ENCODE measurements at regions of chr6 and their contacts with region 1.

Region 1: GRCh38 chr6:109382576-109383437 is 540 bp upstream of the CD164 start:
- DNase-seq: peak; percentile 88
- H3K4me3 Mint-ChIP-seq: peak overlapping the region; percentile 89
- H3K27ac Mint-ChIP-seq: peak overlapping the region; percentile 98
- H3K4me1 Mint-ChIP-seq: peaks cover 46% of the 10 kb centered on the region
- H3K27me3 Mint-ChIP-seq: peaks cover 6% of the 10 kb centered on the region

Region 2: DNA sequence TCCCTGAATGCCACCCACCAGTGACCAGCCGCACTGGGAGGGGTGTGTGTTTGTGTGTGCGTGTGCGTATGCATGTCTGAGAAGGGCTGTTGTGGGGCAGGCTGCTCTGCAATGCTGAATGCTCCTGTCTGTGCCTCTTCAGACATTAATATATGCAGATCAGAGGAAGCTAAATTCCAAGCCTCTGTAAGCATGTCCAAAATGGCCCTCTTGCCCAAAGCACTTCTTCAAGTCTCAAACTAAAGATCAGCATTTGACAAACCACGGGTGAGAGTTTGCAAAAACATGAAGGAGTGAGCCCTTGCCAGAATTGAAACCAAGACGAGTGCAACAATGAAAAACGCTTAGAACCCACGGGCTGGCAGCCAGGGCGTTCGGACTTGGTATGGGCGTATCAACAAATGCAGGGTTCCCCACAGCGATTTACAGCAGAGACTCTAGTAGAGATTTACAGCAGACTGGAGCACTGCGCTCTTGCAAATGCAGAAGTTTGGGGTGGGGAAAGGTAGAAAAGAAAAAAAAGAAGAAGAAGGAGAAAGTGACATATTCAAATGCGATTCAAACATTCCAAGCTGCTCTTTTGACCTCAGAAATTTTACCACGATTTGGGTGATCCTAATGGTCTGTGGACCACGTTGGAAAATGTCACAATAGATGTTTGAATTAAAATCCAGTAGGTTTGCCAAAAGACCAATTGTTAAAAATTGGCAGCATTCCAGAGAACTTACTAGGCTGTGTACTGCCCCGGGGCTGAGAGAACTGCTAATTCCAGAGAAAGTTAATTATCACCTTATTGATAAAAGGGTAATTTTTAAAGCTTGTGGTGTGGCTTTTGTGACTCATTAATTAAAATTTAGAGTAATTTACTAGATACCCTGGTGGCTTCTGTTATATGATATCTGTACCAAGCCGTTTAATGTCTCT is 1562.2 kb before region 1 on chr6:
- intact Hi-C with region 1: loop called (anchors 2 kb)
- DNase-seq: peak; percentile 27
- H3K4me3 Mint-ChIP-seq: peak overlapping the region; percentile 83
- H3K27ac Mint-ChIP-seq: peak overlapping the region; percentile 97
- H3K4me1 Mint-ChIP-seq: peaks cover 88% of the 10 kb centered on the region
- H3K27me3 Mint-ChIP-seq: no peaks in the 10 kb centered on the region

Region 3: DNA sequence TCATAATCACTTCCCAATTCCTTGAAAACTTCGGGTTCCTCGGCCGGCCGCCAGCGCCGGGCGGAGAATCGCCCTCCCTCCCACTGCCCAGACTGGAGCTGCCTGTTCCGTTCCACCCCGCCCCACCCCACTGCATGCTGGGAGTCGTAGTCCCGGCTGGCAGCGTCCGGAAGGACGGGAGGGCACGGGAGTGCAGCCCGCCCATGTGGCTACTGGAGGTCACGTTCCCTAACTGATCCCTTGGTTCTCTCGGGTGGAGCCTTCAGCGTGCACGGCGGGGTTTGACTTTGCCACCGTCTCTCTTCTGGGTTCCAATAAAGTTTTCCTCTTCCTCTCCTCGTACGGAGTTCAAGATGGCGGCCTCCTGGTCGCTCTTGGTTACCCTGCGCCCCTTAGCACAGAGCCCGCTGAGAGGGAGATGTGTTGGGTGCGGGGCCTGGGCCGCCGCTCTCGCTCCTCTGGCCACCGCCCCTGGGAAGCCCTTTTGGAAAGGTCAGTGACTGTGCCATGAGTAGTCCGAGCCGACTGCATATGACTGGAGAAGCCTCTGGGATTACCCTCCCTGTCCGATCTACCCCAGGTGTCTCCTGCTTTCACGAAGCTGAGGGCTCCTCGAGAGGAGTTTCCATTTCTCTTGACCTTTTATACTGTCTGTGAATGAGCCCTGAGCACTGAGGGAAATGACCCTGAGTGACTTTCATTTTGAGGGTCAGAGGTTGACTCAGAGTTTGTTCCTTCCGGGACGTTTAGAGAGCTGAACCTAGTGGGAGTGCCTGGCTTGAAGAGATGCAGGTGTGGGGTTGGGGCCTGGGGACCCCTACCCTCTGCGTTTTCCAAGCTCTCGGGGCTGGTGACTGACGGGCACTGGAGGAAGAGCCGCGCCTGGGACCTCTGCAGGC is 1087.8 kb before region 1 on chr6 and contains the start of gene AFG1L:
- intact Hi-C with region 1: loop called (anchors 10 kb)
- DNase-seq: peak; percentile 82
- H3K4me3 Mint-ChIP-seq: peak within 1 kb of the TSS; percentile 100
- H3K27ac Mint-ChIP-seq: peak within 1 kb of the TSS; percentile 100
- H3K4me1 Mint-ChIP-seq: peaks cover 26% of the 10 kb centered on the region
- H3K27me3 Mint-ChIP-seq: peaks cover 2% of the 10 kb centered on the region
- total RNA-seq, gene AFG1L: 4.3 and 6.0 TPM in 2 replicates

Region 4: DNA sequence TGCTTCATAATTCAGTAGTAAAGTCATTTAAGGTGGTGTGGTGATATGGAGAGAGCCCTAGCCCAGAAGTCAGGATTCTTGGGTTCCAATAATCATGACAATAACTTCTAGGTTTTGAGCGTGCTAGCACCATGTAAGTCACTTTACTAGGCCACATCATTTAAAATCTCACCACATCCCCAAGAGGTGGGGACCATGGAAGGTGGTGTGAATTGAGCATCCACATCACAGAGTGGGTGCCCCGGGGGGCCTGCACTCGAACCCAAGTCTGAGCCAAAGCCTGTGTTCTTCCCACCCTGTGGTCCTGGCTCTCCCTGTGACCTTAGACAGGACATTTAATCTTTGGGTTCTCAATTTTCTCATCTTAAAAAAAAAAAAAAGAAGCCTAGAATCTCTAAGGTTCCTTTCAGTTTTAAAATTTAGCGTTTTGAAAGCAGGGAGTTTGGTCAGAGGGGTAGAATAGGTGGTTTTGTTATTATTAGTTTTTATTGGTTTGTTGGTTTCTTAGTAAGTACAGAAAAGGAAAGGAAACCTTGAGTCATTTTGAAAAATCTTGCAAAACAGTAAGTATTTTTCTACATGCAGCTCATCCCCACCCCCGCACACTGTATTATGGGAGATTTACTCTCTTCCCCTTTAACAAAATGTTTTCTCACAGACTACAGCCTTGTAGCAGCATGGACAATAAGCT is 508.2 kb before region 1 on chr6:
- intact Hi-C with region 1: loop called (anchors 2 kb)
- DNase-seq: peak; percentile 51
- H3K4me3 Mint-ChIP-seq: peak overlapping the region; percentile 34
- H3K27ac Mint-ChIP-seq: peak overlapping the region; percentile 96
- H3K4me1 Mint-ChIP-seq: peaks cover 80% of the 10 kb centered on the region
- H3K27me3 Mint-ChIP-seq: peaks cover 4% of the 10 kb centered on the region

Region 5: GRCh38 chr6:109236115-109237076 is 146.4 kb before region 1 on chr6:
- intact Hi-C with region 1: loop called (anchors 2 kb)
- DNase-seq: peak; percentile 31
- H3K4me3 Mint-ChIP-seq: peak overlapping the region; percentile 31
- H3K27ac Mint-ChIP-seq: peak overlapping the region; percentile 37
- H3K4me1 Mint-ChIP-seq: peaks cover 25% of the 10 kb centered on the region
- H3K27me3 Mint-ChIP-seq: no peaks in the 10 kb centered on the region

Region 6: DNA sequence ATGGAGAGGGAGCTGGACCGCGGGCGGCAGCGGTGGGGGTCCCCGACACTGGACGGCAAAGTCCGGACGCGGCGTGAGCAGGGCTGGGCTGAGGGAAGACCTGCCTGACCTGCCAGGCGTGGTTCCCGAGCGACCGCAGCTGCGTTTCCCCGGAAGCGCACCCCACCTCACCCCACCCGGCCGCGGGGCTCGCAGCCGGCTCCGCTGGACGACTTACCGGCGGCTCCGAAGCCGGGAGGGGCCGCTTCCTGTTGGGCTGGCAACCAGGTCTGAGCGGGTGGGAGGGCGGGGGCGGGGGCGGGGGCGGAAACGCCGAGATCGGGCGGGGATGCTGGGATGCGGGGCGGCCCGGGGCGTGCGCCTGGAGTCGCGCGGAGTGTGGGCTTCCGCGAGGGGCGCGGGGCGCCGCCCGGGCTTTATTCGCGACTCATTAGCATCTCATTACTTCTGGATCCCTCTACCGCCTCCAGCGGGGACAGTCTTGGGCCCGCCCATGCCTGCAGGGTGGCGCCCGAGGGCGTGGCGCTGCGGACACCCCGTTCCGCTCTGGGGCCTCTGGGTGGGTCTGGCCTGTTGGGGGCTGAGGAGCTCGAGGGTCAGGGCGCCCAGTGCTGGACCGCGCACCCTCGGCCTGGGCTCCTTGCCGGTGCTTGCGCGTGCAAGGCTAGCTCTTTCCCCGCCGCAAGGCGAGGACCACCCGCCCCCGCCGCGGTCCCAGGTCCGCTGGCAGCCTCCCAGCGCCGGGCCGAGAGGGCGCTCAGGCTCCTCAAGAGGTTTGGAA is 72.9 kb after region 1 on chr6 and contains the start of gene MICAL1:
- intact Hi-C with region 1: loop called (anchors 1 kb)
- DNase-seq: peak; percentile 69
- H3K4me3 Mint-ChIP-seq: peak within 1 kb of the TSS; percentile 97
- H3K27ac Mint-ChIP-seq: peak within 1 kb of the TSS; percentile 97
- H3K4me1 Mint-ChIP-seq: peaks cover 59% of the 10 kb centered on the region
- H3K27me3 Mint-ChIP-seq: no peaks in the 10 kb centered on the region
- total RNA-seq, gene MICAL1: 40.8 and 47.1 TPM in 2 replicates

Region 7: GRCh38 chr6:110179401-110180227 is 796.8 kb after region 1 on chr6 and contains the start of gene WASF1:
- intact Hi-C with region 1: loop called (anchors 5 kb)
- DNase-seq: peak; percentile 86
- H3K4me3 Mint-ChIP-seq: peak within 1 kb of the TSS; percentile 79
- H3K27ac Mint-ChIP-seq: peak within 1 kb of the TSS; percentile 35
- H3K4me1 Mint-ChIP-seq: peaks cover 10% of the 10 kb centered on the region
- H3K27me3 Mint-ChIP-seq: peaks cover 15% of the 10 kb centered on the region
- total RNA-seq, gene WASF1: 2.0 and 2.3 TPM in 2 replicates